Mammary epithelial cell (primary cell): ENCODE measurements at regions of chr1 and their contacts with region 1.

Region 1: DNA sequence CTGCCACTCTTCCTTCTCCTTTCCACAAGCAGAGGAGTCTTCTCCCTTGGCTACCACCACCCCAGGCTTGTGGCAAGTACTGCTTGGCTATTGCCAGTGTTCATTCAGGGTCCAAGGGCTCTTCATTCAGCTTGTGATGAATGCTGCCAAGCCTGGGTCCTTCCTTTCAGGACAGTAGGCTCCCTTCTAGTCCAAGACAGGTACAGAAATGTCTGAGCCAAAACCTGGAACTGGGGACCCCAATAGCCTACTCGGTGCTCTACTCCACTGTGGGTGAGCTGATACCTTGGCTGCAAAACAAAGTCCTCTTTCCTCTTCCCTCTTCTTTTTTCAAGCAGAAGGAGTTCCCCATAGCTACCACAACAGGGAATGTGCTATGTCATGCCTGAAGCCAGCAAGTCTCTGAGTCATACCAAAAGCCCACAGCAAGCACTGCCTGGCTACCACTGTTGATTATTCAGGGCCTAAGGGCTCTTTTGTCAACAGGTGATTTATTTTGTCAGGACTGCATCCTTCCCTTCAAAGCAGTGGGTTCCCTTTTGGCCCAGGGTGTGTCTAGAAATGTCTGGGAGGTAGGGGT is 268.9 kb downstream of the HHAT start:
- DNase-seq: peak; percentile 88
- H3K4me3 ChIP-seq: no peak overlapping the region
- H3K27ac ChIP-seq: peak overlapping the region; percentile 23
- H3K4me1 ChIP-seq: peaks cover 17% of the 10 kb centered on the region
- H3K27me3 ChIP-seq: no peaks in the 10 kb centered on the region
- CTCF ChIP-seq: no peak

Region 2: DNA sequence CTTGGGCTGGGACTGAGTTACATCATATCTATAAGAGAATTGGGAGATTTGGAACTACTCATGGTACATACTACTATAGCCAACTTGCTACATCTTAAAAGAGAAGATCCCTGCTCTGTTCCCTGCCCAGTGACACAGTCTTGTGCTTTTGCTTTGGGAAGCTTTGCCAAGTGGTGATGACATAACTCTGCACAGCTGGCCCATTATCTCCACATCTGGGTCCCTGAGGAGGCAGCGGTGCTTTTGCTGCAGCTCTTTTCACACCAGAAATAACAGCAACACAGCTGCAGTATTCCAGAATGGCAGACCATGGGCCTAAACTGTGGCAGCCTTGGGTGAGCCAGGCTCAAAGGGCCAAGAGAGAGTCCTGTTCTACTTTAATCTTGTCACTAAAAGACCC is 27.1 kb after region 1 on chr1:
- CTCF ChIA-PET with region 1: no interaction called
- dilution Hi-C with region 1: no loop called
- in situ Hi-C with region 1: no loop called
- intact Hi-C with region 1: no loop called
- DNase-seq: no peak
- H3K4me3 ChIP-seq: no peak overlapping the region
- H3K27ac ChIP-seq: no peak overlapping the region
- H3K4me1 ChIP-seq: no peaks in the 10 kb centered on the region
- H3K27me3 ChIP-seq: no peaks in the 10 kb centered on the region
- CTCF ChIP-seq: no peak

Region 3: GRCh38 chr1:210882414-210883221 is 285.0 kb after region 1 on chr1:
- CTCF ChIA-PET with region 1: no interaction called
- dilution Hi-C with region 1: no loop called
- in situ Hi-C with region 1: no loop called
- intact Hi-C with region 1: loop called (anchors 10 kb)
- DNase-seq: peak; percentile 60
- H3K4me3 ChIP-seq: no peak overlapping the region
- H3K27ac ChIP-seq: no peak overlapping the region
- H3K4me1 ChIP-seq: peaks cover 15% of the 10 kb centered on the region
- H3K27me3 ChIP-seq: peaks cover 24% of the 10 kb centered on the region
- CTCF ChIP-seq: no peak